GM10248 (cell line): ENCODE measurements at regions of chr20 and their contacts with region 1.

Region 1: DNA sequence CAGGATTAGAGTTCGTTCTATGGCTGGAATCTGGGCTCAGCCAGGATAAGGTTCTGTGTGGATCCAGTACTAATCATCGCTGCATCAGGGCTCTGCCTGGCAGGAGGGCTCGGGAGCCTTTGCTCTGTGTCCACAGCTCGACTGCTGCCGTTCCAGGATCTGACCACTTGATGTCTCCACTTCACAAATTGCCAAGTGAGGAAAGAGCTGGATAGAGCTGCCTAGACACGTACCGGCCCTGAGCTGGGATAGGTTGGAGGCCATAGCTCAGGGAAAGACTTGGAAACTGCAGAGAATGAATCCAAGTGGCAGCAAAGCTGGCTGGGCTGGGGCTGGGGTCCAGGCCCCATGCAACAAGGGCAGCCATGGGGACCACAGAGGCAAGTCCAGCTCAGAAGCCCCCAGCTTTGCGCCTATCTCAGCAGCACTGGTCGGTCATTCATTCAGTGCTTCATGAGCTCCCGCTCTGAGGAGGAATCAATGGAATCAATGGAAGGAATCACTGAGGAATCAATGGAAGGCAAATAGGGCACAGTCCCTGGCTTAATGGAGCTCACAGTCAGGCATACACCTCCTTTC is 38.0 kb upstream of the TOP1 start:
- DNase-seq: peak; percentile 81
- CTCF ChIP-seq: peak; percentile 93

Region 2: GRCh38 chr20:40176098-40176841 is 814.4 kb before region 1 on chr20:
- CTCF ChIA-PET with region 1: no interaction called
- POLR2A ChIA-PET with region 1: no interaction called
- DNase-seq: no peak
- CTCF ChIP-seq: no peak

Region 3: GRCh38 chr20:40835321-40835720 is 155.3 kb before region 1 on chr20:
- CTCF ChIA-PET with region 1: no interaction called
- POLR2A ChIA-PET with region 1: no interaction called
- DNase-seq: no peak
- CTCF ChIP-seq: no peak

Region 4: DNA sequence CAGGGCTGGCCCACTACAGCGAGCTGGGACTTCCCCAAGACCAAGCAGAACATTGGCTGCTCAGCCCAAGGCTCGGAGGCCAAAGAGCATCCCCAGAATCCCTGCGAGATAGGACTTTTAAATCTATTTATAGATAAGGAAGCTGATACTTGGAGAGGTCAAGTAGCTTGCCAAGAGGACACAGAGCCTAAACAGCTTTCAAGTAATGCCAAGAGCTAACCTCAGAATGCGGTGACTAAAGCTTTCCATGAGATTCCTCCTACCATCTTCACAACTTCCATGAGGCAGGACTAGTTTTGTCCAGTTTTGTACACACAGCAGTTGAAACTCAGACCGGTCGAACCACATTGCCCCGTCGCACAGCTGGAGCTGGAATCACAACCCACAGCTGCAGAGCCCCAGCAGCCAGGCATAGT is 130.1 kb before region 1 on chr20:
- CTCF ChIA-PET with region 1: no interaction called
- POLR2A ChIA-PET with region 1: no interaction called
- DNase-seq: no peak
- CTCF ChIP-seq: no peak

Region 5: GRCh38 chr20:40980106-40980827 is 10.4 kb before region 1 on chr20:
- CTCF ChIA-PET with region 1: interaction called, 84 read pairs
- POLR2A ChIA-PET with region 1: interaction called, 9 read pairs
- DNase-seq: no peak
- CTCF ChIP-seq: no peak

Region 6: GRCh38 chr20:41011551-41012067 is 21.0 kb after region 1 on chr20:
- CTCF ChIA-PET with region 1: interaction called, 153 read pairs
- POLR2A ChIA-PET with region 1: interaction called, 12 read pairs
- DNase-seq: peak; percentile 83
- CTCF ChIP-seq: no peak

Region 7: GRCh38 chr20:41030531-41031244 is 40.1 kb after region 1 on chr20:
- CTCF ChIA-PET with region 1: interaction called, 83 read pairs
- POLR2A ChIA-PET with region 1: interaction called, 6 read pairs
- DNase-seq: no peak
- CTCF ChIP-seq: no peak

Region 8: GRCh38 chr20:41064377-41064776 is 73.7 kb after region 1 on chr20:
- CTCF ChIA-PET with region 1: interaction called, 24 read pairs
- POLR2A ChIA-PET with region 1: no interaction called
- DNase-seq: peak; percentile 60
- CTCF ChIP-seq: peak; percentile 44

Region 9: GRCh38 chr20:41078329-41078728 is 87.7 kb after region 1 on chr20:
- CTCF ChIA-PET with region 1: interaction called, 17 read pairs
- POLR2A ChIA-PET with region 1: no interaction called
- DNase-seq: no peak
- CTCF ChIP-seq: no peak

Region 10: GRCh38 chr20:41136680-41137613 is 146.3 kb after region 1 on chr20 and contains the start of gene PLCG1:
- CTCF ChIA-PET with region 1: interaction called, 13 read pairs
- POLR2A ChIA-PET with region 1: no interaction called
- DNase-seq: peak; percentile 95
- CTCF ChIP-seq: no peak